WTC11 (cell line): ENCODE measurements at regions of chr19 and their contacts with region 1.

Region 1: GRCh38 chr19:35495107-35496064 is 5.1 kb upstream of the KRTDAP start:
- DNase-seq: peak; percentile 68
- ATAC-seq: peak; percentile 92
- H3K4me3 Mint-ChIP-seq: no peak overlapping the region
- H3K27ac Mint-ChIP-seq: peak overlapping the region; percentile 52; the same call in 1 of the 2 replicates
- H3K4me1 Mint-ChIP-seq: peaks cover 9% of the 10 kb centered on the region
- H3K27me3 Mint-ChIP-seq: peaks cover 13% of the 10 kb centered on the region
- CTCF ChIP-seq: peak; percentile 91

Region 2: GRCh38 chr19:35228177-35228930 is 267.0 kb before region 1 on chr19 and contains the start of gene FAM187B:
- CTCF ChIA-PET with region 1: no interaction called
- POLR2A ChIA-PET with region 1: no interaction called
- DNase-seq: no peak
- ATAC-seq: no peak
- H3K4me3 Mint-ChIP-seq: no peak within 1 kb of the TSS
- H3K27ac Mint-ChIP-seq: no peak within 1 kb of the TSS
- H3K4me1 Mint-ChIP-seq: peaks cover 15% of the 10 kb centered on the region
- H3K27me3 Mint-ChIP-seq: no peaks in the 10 kb centered on the region
- CTCF ChIP-seq: no peak
- total RNA-seq, gene FAM187B: 0.16 to 0.20 TPM in 2 of 3 replicates, not detected in the other

Region 3: GRCh38 chr19:35421362-35421761 is 74.0 kb before region 1 on chr19:
- CTCF ChIA-PET with region 1: interaction called, 12 read pairs
- POLR2A ChIA-PET with region 1: no interaction called
- DNase-seq: no peak
- ATAC-seq: no peak
- H3K4me3 Mint-ChIP-seq: no peak overlapping the region
- H3K27ac Mint-ChIP-seq: no peak overlapping the region
- H3K4me1 Mint-ChIP-seq: no peaks in the 10 kb centered on the region
- H3K27me3 Mint-ChIP-seq: peaks cover 6% of the 10 kb centered on the region
- CTCF ChIP-seq: no peak

Region 4: DNA sequence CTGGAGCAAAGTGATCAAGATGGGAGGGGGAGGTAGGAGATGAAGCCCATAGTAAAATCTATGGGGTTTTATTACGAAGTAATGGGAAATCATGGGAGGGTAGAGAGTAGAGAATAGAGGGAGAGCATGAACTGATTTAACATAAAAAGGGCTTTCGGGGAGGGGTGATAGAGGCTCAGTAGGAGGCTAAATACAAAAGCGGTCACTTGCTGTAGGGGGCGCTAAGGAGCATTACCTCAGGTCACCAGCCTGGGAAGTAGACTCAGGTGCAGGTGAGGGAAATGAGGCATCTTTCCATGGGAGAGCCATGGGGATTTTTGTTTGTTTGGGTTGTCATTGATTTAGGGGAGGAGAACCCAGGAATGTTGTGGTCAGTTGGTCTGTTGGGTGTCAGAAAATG is 19.2 kb before region 1 on chr19:
- CTCF ChIA-PET with region 1: interaction called, 13 read pairs
- POLR2A ChIA-PET with region 1: interaction called, 3 read pairs
- DNase-seq: peak; percentile 77
- ATAC-seq: peak; percentile 79
- H3K4me3 Mint-ChIP-seq: no peak overlapping the region
- H3K27ac Mint-ChIP-seq: no peak overlapping the region
- H3K4me1 Mint-ChIP-seq: peaks cover 7% of the 10 kb centered on the region
- H3K27me3 Mint-ChIP-seq: peaks cover 2% of the 10 kb centered on the region; the same call in 1 of the 2 replicates
- CTCF ChIP-seq: peak; percentile 47

Region 5: DNA sequence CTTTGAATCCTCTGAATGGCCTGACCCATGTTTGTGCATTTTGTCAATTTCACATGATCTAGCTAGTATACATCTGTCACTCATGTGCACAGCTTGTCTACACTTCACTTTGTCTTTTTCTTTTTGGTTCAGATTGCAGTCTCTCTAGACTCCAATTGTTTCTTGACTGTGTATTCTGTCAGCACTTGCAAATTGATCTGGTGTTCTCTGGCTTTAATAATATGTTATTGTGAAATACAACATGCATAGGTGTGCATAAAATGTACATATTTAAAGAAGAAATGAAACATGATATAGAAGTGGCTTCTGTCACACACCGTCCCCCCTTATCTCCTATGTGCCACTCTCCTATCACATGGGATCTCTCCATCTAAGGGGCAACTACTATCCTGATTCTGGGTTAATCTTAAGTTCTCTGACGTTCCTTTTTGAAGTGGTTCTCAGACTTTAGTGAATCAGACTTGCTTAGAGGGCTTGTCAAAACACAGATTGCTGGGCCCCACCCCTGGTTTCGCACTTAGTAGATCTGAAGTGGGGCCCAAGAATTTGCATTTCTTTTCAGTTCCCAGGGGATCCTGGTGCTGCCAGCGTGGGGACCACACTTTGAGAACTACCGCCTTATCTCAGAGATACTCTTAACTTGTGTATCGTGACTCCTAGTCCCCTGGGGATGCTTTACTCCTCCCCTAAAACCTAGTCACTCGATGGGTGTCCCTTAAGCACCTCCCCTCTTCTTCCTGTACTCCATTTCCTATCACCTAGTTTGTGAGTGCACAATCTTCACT is 10.9 kb before region 1 on chr19:
- CTCF ChIA-PET with region 1: interaction called, 11 read pairs
- POLR2A ChIA-PET with region 1: no interaction called
- DNase-seq: no peak
- ATAC-seq: no peak
- H3K4me3 Mint-ChIP-seq: no peak overlapping the region
- H3K27ac Mint-ChIP-seq: no peak overlapping the region
- H3K4me1 Mint-ChIP-seq: no peaks in the 10 kb centered on the region
- H3K27me3 Mint-ChIP-seq: peaks cover 14% of the 10 kb centered on the region
- CTCF ChIP-seq: no peak